GM12878 (cell line): ENCODE measurements at regions of chr6 and their contacts with region 1.

Region 1: GRCh38 chr6:36765594-36766398 is 68.2 kb downstream of the RAB44 start:
- DNase-seq: no peak
- ATAC-seq: peak; percentile 98
- H3K4me3 ChIP-seq: no peak overlapping the region
- H3K27ac ChIP-seq: no peak overlapping the region
- H3K4me1 ChIP-seq: peaks cover 17% of the 10 kb centered on the region
- H3K27me3 ChIP-seq: no peaks in the 10 kb centered on the region
- CTCF ChIP-seq: peak; percentile 97 to 98 (median 98); a peak in 5 of 6 replicates
- EP300 ChIP-seq: no peak
- POLR2A ChIP-seq: no peak
- RAD21 ChIP-seq: peak; percentile 98

Region 2: DNA sequence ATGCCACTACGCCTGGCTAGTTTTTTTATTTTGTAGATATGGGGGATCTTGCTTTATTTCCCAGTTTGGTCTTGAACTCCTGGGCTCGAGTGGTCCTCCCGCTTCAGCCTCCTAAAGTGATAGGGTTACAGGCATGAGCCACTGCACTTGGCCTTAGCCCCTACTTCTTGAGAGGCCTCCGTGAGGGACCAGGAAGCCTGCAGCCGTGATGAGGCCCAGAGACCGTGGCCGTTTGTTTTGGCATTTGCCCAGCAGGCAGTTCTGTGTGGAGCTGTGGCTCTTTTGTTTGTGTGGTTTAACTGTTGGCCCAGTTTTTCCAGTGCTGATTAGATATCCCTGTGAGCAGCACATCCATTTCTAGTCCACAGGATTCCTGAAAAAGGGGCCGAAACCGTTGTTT is 131.9 kb before region 1 on chr6:
- CTCF ChIA-PET with region 1: no interaction called
- POLR2A ChIA-PET with region 1: no interaction called
- RAD21 ChIA-PET with region 1: no interaction called
- SMC1A ChIA-PET with region 1: no interaction called
- in situ Hi-C with region 1: no loop called
- intact Hi-C with region 1: no loop called
- DNase-seq: no peak
- ATAC-seq: no peak
- H3K4me3 ChIP-seq: no peak overlapping the region
- H3K27ac ChIP-seq: no peak overlapping the region
- H3K4me1 ChIP-seq: peaks cover 17% of the 10 kb centered on the region
- H3K27me3 ChIP-seq: no peaks in the 10 kb centered on the region
- CTCF ChIP-seq: no peak
- EP300 ChIP-seq: no peak
- POLR2A ChIP-seq: no peak
- RAD21 ChIP-seq: no peak

Region 3: GRCh38 chr6:36788768-36789167 is 23.0 kb after region 1 on chr6:
- CTCF ChIA-PET with region 1: interaction called, 330 read pairs
- POLR2A ChIA-PET with region 1: no interaction called
- RAD21 ChIA-PET with region 1: interaction called, 5 read pairs
- SMC1A ChIA-PET with region 1: interaction called, 120 read pairs
- in situ Hi-C with region 1: no loop called
- intact Hi-C with region 1: loop called (anchors 2 kb)
- DNase-seq: no peak
- ATAC-seq: no peak
- H3K4me3 ChIP-seq: no peak overlapping the region
- H3K27ac ChIP-seq: no peak overlapping the region
- H3K4me1 ChIP-seq: no peaks in the 10 kb centered on the region
- H3K27me3 ChIP-seq: peaks cover 2 to 7% of the 10 kb centered on the region in 2 experiments; a peak in 2 of 4 replicates
- CTCF ChIP-seq: no peak
- EP300 ChIP-seq: no peak
- POLR2A ChIP-seq: no peak
- RAD21 ChIP-seq: no peak

Region 4: GRCh38 chr6:36851149-36851614 is 85.4 kb after region 1 on chr6:
- CTCF ChIA-PET with region 1: interaction called, 147 read pairs
- POLR2A ChIA-PET with region 1: no interaction called
- RAD21 ChIA-PET with region 1: interaction called, 49 read pairs
- SMC1A ChIA-PET with region 1: interaction called, 106 read pairs
- in situ Hi-C with region 1: no loop called
- intact Hi-C with region 1: loop called (anchors 1 kb)
- DNase-seq: no peak
- ATAC-seq: peak; percentile 46; the same call in 2 of the 3 replicates
- H3K4me3 ChIP-seq: no peak overlapping the region
- H3K27ac ChIP-seq: no peak overlapping the region
- H3K4me1 ChIP-seq: no peaks in the 10 kb centered on the region
- H3K27me3 ChIP-seq: no peaks in the 10 kb centered on the region
- CTCF ChIP-seq: peak; percentile 71 to 79 (median 77)
- EP300 ChIP-seq: no peak
- POLR2A ChIP-seq: no peak
- RAD21 ChIP-seq: peak; percentile 70

Region 5: GRCh38 chr6:36885461-36886401 is 119.9 kb after region 1 on chr6 and contains the start of gene C6orf89:
- CTCF ChIA-PET with region 1: interaction called, 10 read pairs
- POLR2A ChIA-PET with region 1: no interaction called
- RAD21 ChIA-PET with region 1: interaction called, 5 read pairs
- SMC1A ChIA-PET with region 1: interaction called, 7 read pairs
- in situ Hi-C with region 1: no loop called
- intact Hi-C with region 1: no loop called
- DNase-seq: peak; percentile 92
- ATAC-seq: peak; percentile 98
- H3K4me3 ChIP-seq: peak within 1 kb of the TSS; percentile 99
- H3K27ac ChIP-seq: peak within 1 kb of the TSS; percentile 77
- H3K4me1 ChIP-seq: no peaks in the 10 kb centered on the region
- H3K27me3 ChIP-seq: no peaks in the 10 kb centered on the region
- CTCF ChIP-seq: peak; percentile 72 to 83 (median 79)
- EP300 ChIP-seq: no peak
- POLR2A ChIP-seq: peak; percentile 88
- RAD21 ChIP-seq: peak; percentile 24; the same call in 1 of the 2 replicates
- polyA plus RNA-seq, gene C6orf89: 10.8 to 11.4 TPM

Region 6: GRCh38 chr6:36962874-36963273 is 197.1 kb after region 1 on chr6:
- CTCF ChIA-PET with region 1: no interaction called
- POLR2A ChIA-PET with region 1: no interaction called
- RAD21 ChIA-PET with region 1: no interaction called
- SMC1A ChIA-PET with region 1: no interaction called
- in situ Hi-C with region 1: no loop called
- intact Hi-C with region 1: no loop called
- DNase-seq: no peak
- ATAC-seq: peak; percentile 54
- H3K4me3 ChIP-seq: no peak overlapping the region
- H3K27ac ChIP-seq: no peak overlapping the region
- H3K4me1 ChIP-seq: peaks cover 14% of the 10 kb centered on the region
- H3K27me3 ChIP-seq: no peaks in the 10 kb centered on the region
- CTCF ChIP-seq: no peak
- EP300 ChIP-seq: no peak
- POLR2A ChIP-seq: 0 out of 2 replicates have a peak, but pooled peaks have one; percentile 19
- RAD21 ChIP-seq: no peak

Region 7: DNA sequence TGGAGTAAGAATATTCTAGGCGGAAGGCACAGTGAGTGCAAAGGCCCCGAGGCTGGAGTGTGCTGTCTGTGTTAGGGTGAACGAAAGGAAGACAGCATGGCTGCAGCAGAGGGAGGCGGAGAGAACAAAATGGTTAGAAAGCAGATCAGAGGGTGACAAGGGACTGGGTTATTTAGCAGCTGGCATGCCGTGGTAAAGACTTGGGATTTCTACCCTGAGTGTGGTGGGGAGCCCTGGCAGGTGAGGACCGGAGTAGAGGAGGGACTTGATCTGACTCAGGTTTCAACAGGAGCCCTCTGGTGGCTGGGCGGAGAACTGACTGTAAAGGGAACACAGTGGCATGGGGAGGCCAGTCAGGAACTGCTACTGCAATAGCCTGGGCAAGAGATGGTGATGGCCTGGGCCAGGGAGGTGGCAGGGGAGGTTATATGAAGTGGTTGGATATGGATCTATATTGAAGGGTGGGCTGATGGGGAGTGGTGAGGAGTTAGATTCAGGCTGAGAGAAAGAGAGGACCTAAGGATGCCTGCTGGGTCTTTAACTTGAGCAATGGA is 442.2 kb after region 1 on chr6:
- CTCF ChIA-PET with region 1: interaction called, 31 read pairs
- POLR2A ChIA-PET with region 1: no interaction called
- RAD21 ChIA-PET with region 1: interaction called, 7 read pairs
- SMC1A ChIA-PET with region 1: interaction called, 9 read pairs
- in situ Hi-C with region 1: loop called (anchors 5 kb)
- intact Hi-C with region 1: loop called (anchors 1 kb)
- DNase-seq: peak; percentile 28
- ATAC-seq: peak; percentile 96
- H3K4me3 ChIP-seq: no peak overlapping the region
- H3K27ac ChIP-seq: no peak overlapping the region
- H3K4me1 ChIP-seq: peaks cover 3% of the 10 kb centered on the region; the same call in 1 of the 2 replicates
- H3K27me3 ChIP-seq: no peaks in the 10 kb centered on the region
- CTCF ChIP-seq: peak; percentile 87 to 93 (median 87)
- EP300 ChIP-seq: no peak
- POLR2A ChIP-seq: no peak
- RAD21 ChIP-seq: peak; percentile 63